ENCODE measurements at regions of chr5 and their contacts with region 1.

Region 1: DNA sequence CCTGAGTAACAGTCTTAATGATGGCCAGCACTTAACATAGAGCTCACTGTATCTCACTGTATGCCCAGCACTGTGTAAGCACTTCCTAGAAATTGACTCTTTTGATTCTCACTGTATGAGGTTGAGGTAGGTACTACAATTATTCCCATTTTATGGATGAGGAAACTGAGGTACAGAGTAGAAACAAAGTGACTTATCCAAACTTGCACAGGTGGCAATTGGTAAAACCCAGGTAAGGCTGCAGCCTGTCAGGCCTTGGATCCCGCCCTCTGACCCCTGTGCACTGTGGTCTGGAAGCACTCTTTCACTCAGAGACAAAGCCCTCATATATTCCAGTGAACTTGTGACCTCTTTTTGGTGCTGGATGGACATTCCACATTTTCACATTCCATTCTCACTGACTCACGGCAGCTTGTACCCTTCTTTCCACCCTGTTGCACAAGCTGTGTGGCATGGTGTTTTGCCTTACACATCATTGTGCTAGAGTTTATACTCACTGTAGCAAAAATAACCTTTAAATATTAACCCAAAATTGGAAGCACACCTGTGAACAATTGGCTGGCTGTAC is 21.7 kb downstream of the ANKRD55 start:
- DNase-seq: no peak
- H3K4me3 ChIP-seq: no peak overlapping the region
- H3K27ac ChIP-seq: no peak overlapping the region
- H3K4me1 ChIP-seq: no peaks in the 10 kb centered on the region
- H3K27me3 ChIP-seq: no peaks in the 10 kb centered on the region
- CTCF ChIP-seq: no peak

Region 2: GRCh38 chr5:55821731-55822512 is 389.5 kb before region 1 on chr5:
- intact Hi-C with region 1: loop called (anchors 10 kb)
- DNase-seq: no peak
- H3K4me3 ChIP-seq: peak overlapping the region; percentile 21
- H3K27ac ChIP-seq: no peak overlapping the region
- H3K4me1 ChIP-seq: no peaks in the 10 kb centered on the region
- H3K27me3 ChIP-seq: no peaks in the 10 kb centered on the region
- CTCF ChIP-seq: no peak

Region 3: DNA sequence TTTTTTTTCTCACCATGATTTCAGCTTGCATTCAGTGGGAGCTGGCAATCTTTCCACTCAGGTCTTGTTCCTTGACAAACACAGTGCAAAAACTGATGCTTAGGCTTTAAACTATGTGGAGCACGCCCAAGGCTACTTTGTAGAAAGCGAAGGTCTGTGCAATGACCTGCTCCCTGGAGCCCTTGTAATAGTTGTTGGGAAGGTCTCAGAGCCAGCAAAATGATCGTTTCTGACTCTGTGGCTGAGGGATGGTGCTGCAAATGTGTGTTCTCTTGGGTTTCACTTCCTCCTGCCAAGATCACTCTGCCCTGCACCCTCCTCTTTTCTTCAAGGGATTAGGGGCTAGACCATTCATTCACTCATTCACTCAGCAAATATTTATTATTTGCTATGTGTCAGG is 354.3 kb after region 1 on chr5:
- intact Hi-C with region 1: no loop called
- DNase-seq: no peak
- H3K4me3 ChIP-seq: no peak overlapping the region
- H3K27ac ChIP-seq: no peak overlapping the region
- H3K4me1 ChIP-seq: no peaks in the 10 kb centered on the region
- H3K27me3 ChIP-seq: no peaks in the 10 kb centered on the region
- CTCF ChIP-seq: no peak